Activated CD4-positive, alpha-beta memory T cell treated with anti-CD3 and anti-CD28 coated beads for 36 hours (primary cell): ENCODE measurements at regions of chr6 and their contacts with region 1.

Region 1: GRCh38 chr6:30556066-30556905 is at the start of gene GNL1:
- DNase-seq: peak; percentile 100
- H3K4me3 Mint-ChIP-seq: peak within 1 kb of the TSS; percentile 97
- H3K27ac Mint-ChIP-seq: peak within 1 kb of the TSS; percentile 98
- H3K4me1 Mint-ChIP-seq: peaks cover 44% of the 10 kb centered on the region
- H3K27me3 Mint-ChIP-seq: no peaks in the 10 kb centered on the region
- total RNA-seq, gene GNL1: 94.0 to 95.8 TPM

Region 2: GRCh38 chr6:30234356-30234755 is 321.9 kb before region 1 on chr6:
- CTCF ChIA-PET with region 1: no interaction called
- POLR2A ChIA-PET with region 1: no interaction called
- intact Hi-C with region 1: no loop called
- DNase-seq: no peak
- H3K4me3 Mint-ChIP-seq: no peak overlapping the region
- H3K27ac Mint-ChIP-seq: no peak overlapping the region
- H3K4me1 Mint-ChIP-seq: no peaks in the 10 kb centered on the region
- H3K27me3 Mint-ChIP-seq: peaks cover 15% of the 10 kb centered on the region

Region 3: GRCh38 chr6:30483677-30484279 is 72.5 kb before region 1 on chr6:
- CTCF ChIA-PET with region 1: interaction called, 12 read pairs
- POLR2A ChIA-PET with region 1: no interaction called
- intact Hi-C with region 1: no loop called
- DNase-seq: no peak
- H3K4me3 Mint-ChIP-seq: no peak overlapping the region
- H3K27ac Mint-ChIP-seq: no peak overlapping the region
- H3K4me1 Mint-ChIP-seq: peaks cover 34% of the 10 kb centered on the region
- H3K27me3 Mint-ChIP-seq: peaks cover 29% of the 10 kb centered on the region

Region 4: GRCh38 chr6:30515932-30516753 is 40.1 kb before region 1 on chr6:
- CTCF ChIA-PET with region 1: no interaction called
- POLR2A ChIA-PET with region 1: no interaction called
- intact Hi-C with region 1: loop called (anchors 1 kb)
- DNase-seq: peak; percentile 97
- H3K4me3 Mint-ChIP-seq: peak overlapping the region; percentile 78
- H3K27ac Mint-ChIP-seq: peak overlapping the region; percentile 98
- H3K4me1 Mint-ChIP-seq: peaks cover 59% of the 10 kb centered on the region
- H3K27me3 Mint-ChIP-seq: no peaks in the 10 kb centered on the region

Region 5: DNA sequence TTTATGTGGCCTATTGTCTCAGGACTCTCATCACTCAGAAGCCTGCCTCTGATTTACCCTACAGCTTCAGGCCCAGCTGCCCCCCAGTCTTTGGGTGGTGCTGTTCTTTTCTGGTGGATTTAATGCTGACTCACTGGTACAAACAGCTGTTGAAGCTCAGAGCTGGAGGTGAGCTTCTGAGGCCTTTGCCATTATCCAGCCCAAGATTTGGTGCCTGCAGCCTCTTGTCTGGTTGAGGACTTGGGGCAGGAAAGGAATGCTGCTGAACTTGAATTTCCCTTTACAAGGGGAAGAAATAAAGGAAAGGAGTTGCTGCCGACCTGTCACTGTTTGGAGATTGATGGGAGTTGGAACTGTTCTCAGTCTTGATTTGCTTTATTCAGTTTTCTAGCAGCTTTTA is 34.7 kb after region 1 on chr6:
- CTCF ChIA-PET with region 1: interaction called, 13 read pairs
- POLR2A ChIA-PET with region 1: no interaction called
- intact Hi-C with region 1: no loop called
- DNase-seq: no peak
- H3K4me3 Mint-ChIP-seq: no peak overlapping the region
- H3K27ac Mint-ChIP-seq: no peak overlapping the region
- H3K4me1 Mint-ChIP-seq: no peaks in the 10 kb centered on the region
- H3K27me3 Mint-ChIP-seq: no peaks in the 10 kb centered on the region